ENCODE measurements at regions of chr15 and their contacts with region 1.

Region 1: GRCh38 chr15:75453703-75454470 is 2.4 kb upstream of the SIN3A start:
- DNase-seq: peak; percentile 97
- H3K4me3 Mint-ChIP-seq: peak overlapping the region; percentile 98
- H3K27ac Mint-ChIP-seq: peak overlapping the region; percentile 100
- H3K4me1 Mint-ChIP-seq: peaks cover 33% of the 10 kb centered on the region
- H3K27me3 Mint-ChIP-seq: no peaks in the 10 kb centered on the region

Region 2: GRCh38 chr15:73991726-73992593 is 1461.9 kb before region 1 on chr15 and contains the start of gene STOML1:
- intact Hi-C with region 1: loop called (anchors 5 kb)
- DNase-seq: peak; percentile 96
- H3K4me3 Mint-ChIP-seq: peak within 1 kb of the TSS; percentile 89
- H3K27ac Mint-ChIP-seq: peak within 1 kb of the TSS; percentile 85
- H3K4me1 Mint-ChIP-seq: peaks cover 49% of the 10 kb centered on the region
- H3K27me3 Mint-ChIP-seq: no peaks in the 10 kb centered on the region
- total RNA-seq, gene STOML1: 10.6 and 11.6 TPM in 2 replicates

Region 3: GRCh38 chr15:74873036-74873755 is 580.7 kb before region 1 on chr15 and contains the start of gene SCAMP2:
- intact Hi-C with region 1: loop called (anchors 5 kb)
- DNase-seq: peak; percentile 86
- H3K4me3 Mint-ChIP-seq: peak within 1 kb of the TSS; percentile 97
- H3K27ac Mint-ChIP-seq: peak within 1 kb of the TSS; percentile 86
- H3K4me1 Mint-ChIP-seq: peaks cover 34% of the 10 kb centered on the region
- H3K27me3 Mint-ChIP-seq: peaks cover 4% of the 10 kb centered on the region
- total RNA-seq, gene SCAMP2: 93.7 and 103 TPM in 2 replicates

Region 4: DNA sequence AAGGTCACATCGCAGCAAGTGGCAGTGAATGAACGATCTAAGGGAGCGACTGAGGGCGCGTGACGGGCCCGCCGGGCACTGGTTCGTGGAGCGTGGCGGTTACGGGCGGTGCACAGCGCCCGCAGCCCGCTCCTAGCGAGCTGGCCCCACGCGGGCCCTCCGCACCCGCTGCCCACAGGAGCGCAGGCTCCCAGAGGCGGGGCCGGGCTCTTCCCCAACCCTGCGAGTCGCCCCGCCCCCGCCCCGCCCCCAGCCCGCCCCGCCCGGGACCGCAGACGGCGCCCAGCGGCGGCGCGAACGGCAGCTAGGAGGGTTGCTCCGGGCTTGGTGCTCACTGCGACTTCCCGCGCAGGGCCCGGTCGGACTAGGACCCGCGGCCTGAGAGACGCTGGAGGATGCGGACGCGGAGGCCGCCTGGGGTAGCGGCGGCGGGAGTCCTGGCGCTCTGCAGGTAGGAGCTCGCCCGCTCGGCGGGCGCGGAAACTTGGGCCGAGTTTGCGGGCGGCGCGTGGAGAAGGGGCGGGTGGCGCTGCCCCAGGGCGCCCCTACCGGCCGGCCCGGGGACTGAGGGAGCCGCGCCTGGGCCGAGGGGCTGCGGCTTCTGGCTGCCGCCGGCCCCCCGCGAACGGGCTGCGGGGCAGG is 252.2 kb before region 1 on chr15 and contains the start of gene C15orf39:
- intact Hi-C with region 1: loop called (anchors 5 kb)
- DNase-seq: peak; percentile 74
- H3K4me3 Mint-ChIP-seq: peak within 1 kb of the TSS; percentile 92
- H3K27ac Mint-ChIP-seq: peak within 1 kb of the TSS; percentile 90
- H3K4me1 Mint-ChIP-seq: peaks cover 62% of the 10 kb centered on the region
- H3K27me3 Mint-ChIP-seq: peaks cover 4% of the 10 kb centered on the region
- total RNA-seq, gene C15orf39: 46.1 and 49.5 TPM in 2 replicates

Region 5: GRCh38 chr15:75578948-75579920 is 125.3 kb after region 1 on chr15 and contains the start of gene PTPN9:
- intact Hi-C with region 1: loop called (anchors 2 kb)
- DNase-seq: peak; percentile 57
- H3K4me3 Mint-ChIP-seq: peak within 1 kb of the TSS; percentile 95
- H3K27ac Mint-ChIP-seq: peak within 1 kb of the TSS; percentile 91
- H3K4me1 Mint-ChIP-seq: peaks cover 23% of the 10 kb centered on the region
- H3K27me3 Mint-ChIP-seq: no peaks in the 10 kb centered on the region
- total RNA-seq, gene PTPN9: 28.0 and 31.7 TPM in 2 replicates

Region 6: DNA sequence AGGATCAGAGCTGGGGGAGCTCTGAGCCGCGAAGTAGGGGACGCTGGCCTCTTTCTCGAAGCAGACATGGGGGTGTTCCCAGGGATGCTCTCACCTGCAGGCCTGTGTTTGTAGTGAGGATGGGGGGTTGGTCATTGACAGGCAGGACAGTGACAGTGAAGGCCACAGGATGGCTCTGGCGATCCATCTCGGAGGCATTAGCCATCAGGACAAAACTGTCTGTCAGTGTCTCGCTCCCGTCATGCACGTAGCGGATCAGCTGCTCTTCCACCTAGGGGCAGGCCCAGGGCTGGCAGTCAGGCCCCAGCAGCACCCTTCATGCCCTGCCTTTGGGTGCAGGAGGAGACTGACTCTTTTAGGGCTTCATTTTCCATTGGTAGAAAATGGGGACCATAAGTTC is 230.8 kb after region 1 on chr15:
- intact Hi-C with region 1: loop called (anchors 1 kb)
- DNase-seq: no peak
- H3K4me3 Mint-ChIP-seq: no peak overlapping the region
- H3K27ac Mint-ChIP-seq: no peak overlapping the region
- H3K4me1 Mint-ChIP-seq: no peaks in the 10 kb centered on the region
- H3K27me3 Mint-ChIP-seq: no peaks in the 10 kb centered on the region

Region 7: GRCh38 chr15:75842722-75843551 is 389.1 kb after region 1 on chr15 and contains the start of gene UBE2Q2:
- intact Hi-C with region 1: loop called (anchors 5 kb)
- DNase-seq: peak; percentile 68
- H3K4me3 Mint-ChIP-seq: peak within 1 kb of the TSS; percentile 99
- H3K27ac Mint-ChIP-seq: peak within 1 kb of the TSS; percentile 93
- H3K4me1 Mint-ChIP-seq: peaks cover 50% of the 10 kb centered on the region
- H3K27me3 Mint-ChIP-seq: peaks cover 13% of the 10 kb centered on the region
- total RNA-seq, gene UBE2Q2: 20.5 and 20.9 TPM in 2 replicates